ENCODE measurements at regions of chr4 and their contacts with region 1.

Region 1: DNA sequence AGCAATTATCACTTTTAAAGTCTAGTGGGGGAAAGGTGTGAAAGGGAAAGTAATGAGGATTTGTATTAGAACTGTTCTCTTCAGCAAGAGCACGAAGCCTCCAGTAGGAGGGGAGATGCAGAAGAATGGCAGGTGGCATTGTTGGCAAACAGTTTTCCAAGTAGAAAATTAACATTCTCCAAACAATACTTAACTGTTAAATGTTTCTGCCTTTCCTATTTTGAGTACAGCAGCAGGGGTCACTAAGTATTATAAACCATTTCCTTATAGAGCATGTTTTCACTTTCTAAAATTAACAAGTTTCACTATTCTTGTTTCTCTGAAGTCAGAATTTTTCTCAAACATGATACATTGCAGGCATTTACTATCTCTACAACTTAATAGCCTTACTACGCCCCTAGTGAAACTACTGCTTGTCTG is 58.7 kb downstream of the LEF1 start:
- DNase-seq: no peak
- ATAC-seq: peak; percentile 25
- H3K4me3 Mint-ChIP-seq: peak overlapping the region; percentile 22
- H3K27ac Mint-ChIP-seq: peak overlapping the region; percentile 91
- H3K4me1 Mint-ChIP-seq: peaks cover 89% of the 10 kb centered on the region
- H3K27me3 Mint-ChIP-seq: no peaks in the 10 kb centered on the region

Region 2: GRCh38 chr4:108072300-108072699 is 37.7 kb before region 1 on chr4:
- CTCF ChIA-PET with region 1: interaction called, 3 read pairs
- POLR2A ChIA-PET with region 1: interaction called, 3 read pairs
- intact Hi-C with region 1: loop called in 1 of 2 experiments (anchors 5 kb)
- DNase-seq: peak; percentile 77
- ATAC-seq: peak; percentile 80
- H3K4me3 Mint-ChIP-seq: peak overlapping the region; percentile 11
- H3K27ac Mint-ChIP-seq: peak overlapping the region; percentile 89
- H3K4me1 Mint-ChIP-seq: peaks cover 77% of the 10 kb centered on the region
- H3K27me3 Mint-ChIP-seq: no peaks in the 10 kb centered on the region

Region 3: GRCh38 chr4:108141213-108141950 is 31.4 kb after region 1 on chr4:
- CTCF ChIA-PET with region 1: interaction called, 37 read pairs
- POLR2A ChIA-PET with region 1: interaction called, 7 read pairs
- intact Hi-C with region 1: loop called (anchors 1 kb)
- DNase-seq: peak; percentile 70
- ATAC-seq: peak; percentile 53
- H3K4me3 Mint-ChIP-seq: peak overlapping the region; percentile 75
- H3K27ac Mint-ChIP-seq: peak overlapping the region; percentile 100
- H3K4me1 Mint-ChIP-seq: peaks cover 89% of the 10 kb centered on the region
- H3K27me3 Mint-ChIP-seq: no peaks in the 10 kb centered on the region

Region 4: GRCh38 chr4:108166441-108167315 is 56.7 kb after region 1 on chr4:
- CTCF ChIA-PET with region 1: interaction called, 4 read pairs
- POLR2A ChIA-PET with region 1: interaction called, 4 read pairs
- intact Hi-C with region 1: loop called (anchors 1 to 2 kb)
- DNase-seq: peak; percentile 86
- ATAC-seq: peak; percentile 35
- H3K4me3 Mint-ChIP-seq: peak overlapping the region; percentile 85
- H3K27ac Mint-ChIP-seq: peak overlapping the region; percentile 96
- H3K4me1 Mint-ChIP-seq: peaks cover 39% of the 10 kb centered on the region
- H3K27me3 Mint-ChIP-seq: peaks cover 12% of the 10 kb centered on the region

Region 5: GRCh38 chr4:108570993-108571569 is 461.1 kb after region 1 on chr4:
- CTCF ChIA-PET with region 1: interaction called, 3 read pairs
- POLR2A ChIA-PET with region 1: no interaction called
- intact Hi-C with region 1: loop called in 1 of 2 experiments (anchors 1 kb)
- DNase-seq: no peak
- ATAC-seq: no peak
- H3K4me3 Mint-ChIP-seq: no peak overlapping the region
- H3K27ac Mint-ChIP-seq: no peak overlapping the region
- H3K4me1 Mint-ChIP-seq: peaks cover 23% of the 10 kb centered on the region
- H3K27me3 Mint-ChIP-seq: no peaks in the 10 kb centered on the region